Sigmoid colon (tissue), 7 donors: ENCODE measurements at regions of chr2 and their contacts with region 1.

Region 1: GRCh38 chr2:62195421-62196277 is at the start of gene B3GNT2:
- DNase-seq: peak; percentile 88
- H3K4me3 ChIP-seq: peak within 1 kb of the TSS; percentile 83 to 98 (median 92)
- H3K27ac ChIP-seq: peak within 1 kb of the TSS; percentile 94 to 98 (median 96)
- H3K4me1 ChIP-seq: peaks cover 0 to 43% (median 28%) of the 10 kb centered on the region in 4 donors
- H3K27me3 ChIP-seq: no peaks in the 10 kb centered on the region
- CTCF ChIP-seq: no peak
- EP300 ChIP-seq: no peak
- POLR2A ChIP-seq: peak in 1 of 2 donors; percentile 32
- total RNA-seq, gene B3GNT2: 16.9 to 25.8 (median 24.0) TPM

Region 2: GRCh38 chr2:61910603-61911002 is 285.0 kb before region 1 on chr2:
- intact Hi-C with region 1: loop called (anchors 5 kb)
- DNase-seq: no peak
- H3K4me3 ChIP-seq: no peak overlapping the region
- H3K27ac ChIP-seq: no peak overlapping the region
- H3K4me1 ChIP-seq: peaks cover 0 to 19% (median 13%) of the 10 kb centered on the region in 4 donors
- H3K27me3 ChIP-seq: no peaks in the 10 kb centered on the region
- CTCF ChIP-seq: no peak
- EP300 ChIP-seq: no peak
- POLR2A ChIP-seq: no peak

Region 3: GRCh38 chr2:62014102-62014501 is 181.5 kb before region 1 on chr2:
- intact Hi-C with region 1: loop called (anchors 5 kb)
- DNase-seq: peak; percentile 92
- H3K4me3 ChIP-seq: no peak overlapping the region
- H3K27ac ChIP-seq: peak overlapping the region; percentile 49 to 69 (median 62)
- H3K4me1 ChIP-seq: peaks cover 0 to 41% (median 27%) of the 10 kb centered on the region in 4 donors
- H3K27me3 ChIP-seq: no peaks in the 10 kb centered on the region
- CTCF ChIP-seq: peak in 3 of 4 experiments; percentile 26 to 48 (median 34)
- EP300 ChIP-seq: peak in 2 of 4 donors; percentile 3 to 19
- POLR2A ChIP-seq: no peak

Region 4: DNA sequence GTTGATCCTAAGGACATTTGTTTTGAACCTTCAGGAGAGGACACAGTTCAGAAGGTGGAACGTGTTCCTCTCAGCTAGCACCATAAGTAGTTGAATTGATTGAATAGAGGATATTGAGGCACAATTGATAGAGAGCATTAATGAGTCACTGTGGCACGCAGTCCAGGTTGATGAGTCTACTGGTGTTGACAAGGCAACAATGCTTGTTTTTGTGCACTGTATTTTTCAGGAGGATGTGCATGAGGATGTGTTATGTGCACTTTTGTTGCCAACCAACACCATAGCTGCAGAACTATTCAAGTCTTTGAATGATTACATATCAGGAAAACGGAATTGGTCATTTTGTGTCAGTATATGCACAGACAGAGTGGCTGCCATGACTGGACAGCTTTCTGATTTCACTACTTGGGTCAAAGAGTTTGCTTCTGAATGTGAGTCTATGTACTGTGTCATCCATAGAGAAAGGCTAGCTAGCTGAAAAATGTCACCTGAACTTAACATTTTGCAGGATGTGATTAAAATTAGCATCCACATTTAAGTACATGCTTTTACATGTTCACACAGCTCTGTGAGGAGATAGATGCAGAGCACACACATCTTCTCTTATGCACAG is 139.8 kb before region 1 on chr2:
- intact Hi-C with region 1: no loop called
- DNase-seq: no peak
- H3K4me3 ChIP-seq: no peak overlapping the region
- H3K27ac ChIP-seq: no peak overlapping the region
- H3K4me1 ChIP-seq: no peaks in the 10 kb centered on the region
- H3K27me3 ChIP-seq: no peaks in the 10 kb centered on the region
- CTCF ChIP-seq: no peak
- EP300 ChIP-seq: no peak
- POLR2A ChIP-seq: no peak

Region 5: GRCh38 chr2:62076980-62077638 is 118.5 kb before region 1 on chr2:
- intact Hi-C with region 1: loop called (anchors 5 kb)
- DNase-seq: no peak
- H3K4me3 ChIP-seq: no peak overlapping the region
- H3K27ac ChIP-seq: peak overlapping the region in 2 of 4 donors; percentile 8 to 13
- H3K4me1 ChIP-seq: peaks cover 0 to 59% (median 16%) of the 10 kb centered on the region in 4 donors
- H3K27me3 ChIP-seq: no peaks in the 10 kb centered on the region
- CTCF ChIP-seq: no peak
- EP300 ChIP-seq: peak in 1 of 4 donors; percentile 23
- POLR2A ChIP-seq: no peak

Region 6: GRCh38 chr2:62293490-62294271 is 98.0 kb after region 1 on chr2:
- intact Hi-C with region 1: loop called (anchors 5 kb)
- DNase-seq: peak; percentile 82
- H3K4me3 ChIP-seq: peak overlapping the region in 3 of 4 donors; percentile 5 to 11 (median 7)
- H3K27ac ChIP-seq: peak overlapping the region; percentile 68 to 75 (median 72)
- H3K4me1 ChIP-seq: peaks cover 0 to 39% (median 27%) of the 10 kb centered on the region in 4 donors
- H3K27me3 ChIP-seq: no peaks in the 10 kb centered on the region
- CTCF ChIP-seq: no peak
- EP300 ChIP-seq: no peak
- POLR2A ChIP-seq: no peak

Region 7: GRCh38 chr2:62321380-62322289 is 126.0 kb after region 1 on chr2:
- intact Hi-C with region 1: no loop called
- DNase-seq: no peak
- H3K4me3 ChIP-seq: no peak overlapping the region
- H3K27ac ChIP-seq: no peak overlapping the region
- H3K4me1 ChIP-seq: no peaks in the 10 kb centered on the region
- H3K27me3 ChIP-seq: no peaks in the 10 kb centered on the region
- CTCF ChIP-seq: no peak
- EP300 ChIP-seq: no peak
- POLR2A ChIP-seq: no peak

Region 8: DNA sequence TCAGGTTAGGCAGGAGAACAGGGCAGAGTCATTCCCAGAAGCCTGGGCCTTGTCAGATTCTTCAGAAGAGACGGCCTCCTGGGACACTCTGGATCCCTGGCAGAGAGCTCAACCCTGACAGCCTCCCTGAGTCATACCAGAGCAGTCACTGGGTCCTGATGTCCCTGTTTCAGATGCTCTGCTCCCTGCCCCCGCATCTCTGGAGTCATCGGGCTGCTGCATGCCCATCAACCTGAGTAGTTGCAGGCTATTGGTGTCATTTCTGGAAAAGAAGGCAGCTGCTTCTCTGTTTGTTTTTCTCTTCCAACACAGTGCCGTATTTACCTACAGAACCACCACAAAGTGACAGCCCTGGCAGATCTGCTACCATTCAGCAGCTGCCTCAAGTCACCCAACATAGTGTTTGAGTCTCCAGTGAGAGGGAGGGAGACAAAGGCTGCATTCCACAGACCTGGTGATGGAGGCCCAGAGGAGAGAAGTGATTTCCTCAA is 145.4 kb after region 1 on chr2:
- intact Hi-C with region 1: loop called (anchors 5 kb)
- DNase-seq: peak; percentile 90
- H3K4me3 ChIP-seq: no peak overlapping the region
- H3K27ac ChIP-seq: peak overlapping the region in 3 of 4 donors; percentile 54 to 68 (median 57)
- H3K4me1 ChIP-seq: peaks cover 0 to 34% (median 15%) of the 10 kb centered on the region in 4 donors
- H3K27me3 ChIP-seq: no peaks in the 10 kb centered on the region
- CTCF ChIP-seq: no peak
- EP300 ChIP-seq: peak in 3 of 4 donors; percentile 42 to 78 (median 73)
- POLR2A ChIP-seq: no peak

Region 9: GRCh38 chr2:62410015-62410453 is 214.4 kb after region 1 on chr2:
- intact Hi-C with region 1: loop called (anchors 2 kb)
- DNase-seq: no peak
- H3K4me3 ChIP-seq: no peak overlapping the region
- H3K27ac ChIP-seq: peak overlapping the region in 2 of 4 donors; percentile 4 to 79
- H3K4me1 ChIP-seq: peaks cover 0 to 28% (median 23%) of the 10 kb centered on the region in 4 donors
- H3K27me3 ChIP-seq: no peaks in the 10 kb centered on the region
- CTCF ChIP-seq: no peak
- EP300 ChIP-seq: no peak
- POLR2A ChIP-seq: no peak